HEK293 (cell line): ENCODE measurements at regions of chr1 and their contacts with region 1.

Region 1: GRCh38 chr1:230321741-230322432 is 104.2 kb downstream of the PGBD5 start:
- H3K4me3 ChIP-seq: no peak overlapping the region
- H3K27ac ChIP-seq: no peak overlapping the region
- H3K4me1 ChIP-seq: peaks cover 8% of the 10 kb centered on the region
- CTCF ChIP-seq: no peak

Region 2: GRCh38 chr1:230310381-230311163 is 11.3 kb before region 1 on chr1:
- CTCF ChIA-PET with region 1: interaction called, 10 read pairs
- POLR2A ChIA-PET with region 1: no interaction called
- H3K4me3 ChIP-seq: no peak overlapping the region
- H3K27ac ChIP-seq: no peak overlapping the region
- H3K4me1 ChIP-seq: no peaks in the 10 kb centered on the region
- CTCF ChIP-seq: peak; percentile 96

Region 3: DNA sequence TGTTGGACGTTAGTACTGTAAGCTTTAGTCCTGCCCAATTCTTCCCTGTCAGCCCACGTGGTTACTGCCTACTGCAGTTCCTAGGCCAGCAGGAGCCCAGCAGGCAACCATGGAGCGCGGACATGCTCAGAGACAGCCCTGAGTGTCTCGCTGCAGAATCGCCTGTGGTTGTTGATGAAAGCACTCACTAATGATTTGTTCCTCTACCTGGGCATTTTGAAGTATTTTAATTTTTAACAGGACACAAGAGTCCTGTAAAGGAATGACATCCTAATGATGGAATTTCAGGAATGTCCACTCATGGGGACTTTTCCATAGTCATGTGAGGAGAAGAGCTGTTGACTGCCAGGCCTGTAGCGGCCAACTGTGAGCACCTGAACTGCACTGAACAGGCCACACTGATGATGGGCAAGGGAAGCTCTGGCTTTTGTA is 60.2 kb after region 1 on chr1:
- CTCF ChIA-PET with region 1: no interaction called
- POLR2A ChIA-PET with region 1: no interaction called
- H3K4me3 ChIP-seq: no peak overlapping the region
- H3K27ac ChIP-seq: no peak overlapping the region
- H3K4me1 ChIP-seq: no peaks in the 10 kb centered on the region
- CTCF ChIP-seq: no peak